Activated naive CD4-positive, alpha-beta T cell treated with anti-CD3 and anti-CD28 coated beads, Interleukin-2, amount 10 ng/mL, durations not matched to agents 7 days and 5 days (primary cell): ENCODE measurements at regions of chr2 and their contacts with region 1.

Region 1: DNA sequence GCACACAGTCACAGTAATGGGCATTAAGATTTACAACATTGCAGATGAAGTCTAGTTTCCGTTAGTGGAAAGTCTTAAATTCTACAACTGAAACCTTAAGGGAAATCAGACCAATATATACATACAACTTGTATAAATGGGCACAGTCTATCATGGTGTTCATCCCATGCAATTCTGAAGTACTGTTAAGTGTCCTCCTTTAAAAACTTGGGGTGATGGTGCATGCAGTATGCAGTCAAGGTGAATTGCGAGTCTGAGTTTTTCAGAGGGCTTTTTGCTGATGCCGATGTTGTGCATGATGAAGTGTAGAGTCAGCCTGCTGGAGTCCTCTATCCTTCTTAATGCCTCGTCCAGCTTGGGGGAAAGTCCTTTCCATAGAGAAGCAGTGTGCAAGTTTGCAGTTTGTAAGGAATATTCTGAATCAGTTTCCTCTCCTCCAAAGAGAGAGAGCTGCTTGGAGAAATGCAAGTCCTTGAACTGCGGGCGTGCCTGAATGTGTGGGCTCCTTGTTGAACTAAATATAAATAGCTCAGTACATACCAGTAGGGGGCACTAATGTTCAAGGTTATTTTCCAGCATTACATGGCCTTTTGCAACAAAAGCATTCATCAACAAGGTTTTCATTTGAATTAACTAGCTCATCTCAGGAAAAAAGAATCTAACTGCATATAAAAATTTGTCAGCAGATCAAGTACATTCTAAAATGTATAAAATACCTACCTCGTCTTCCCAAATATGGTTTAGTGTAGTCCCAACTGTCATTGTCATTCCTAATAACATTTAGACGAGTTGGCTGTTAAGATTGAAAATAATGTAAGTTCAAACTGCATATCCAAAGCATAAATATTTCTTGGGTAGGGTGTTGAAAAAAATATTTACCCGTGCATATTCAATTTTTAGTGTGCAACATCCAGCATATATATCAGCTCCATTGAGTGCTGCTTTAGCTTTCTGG is 21.3 kb downstream of the HNRNPLL start:
- DNase-seq: peak; percentile 52
- H3K4me3 Mint-ChIP-seq: no peak overlapping the region
- H3K27ac Mint-ChIP-seq: peak overlapping the region; percentile 13
- H3K4me1 Mint-ChIP-seq: peaks cover 9% of the 10 kb centered on the region
- H3K27me3 Mint-ChIP-seq: no peaks in the 10 kb centered on the region

Region 2: DNA sequence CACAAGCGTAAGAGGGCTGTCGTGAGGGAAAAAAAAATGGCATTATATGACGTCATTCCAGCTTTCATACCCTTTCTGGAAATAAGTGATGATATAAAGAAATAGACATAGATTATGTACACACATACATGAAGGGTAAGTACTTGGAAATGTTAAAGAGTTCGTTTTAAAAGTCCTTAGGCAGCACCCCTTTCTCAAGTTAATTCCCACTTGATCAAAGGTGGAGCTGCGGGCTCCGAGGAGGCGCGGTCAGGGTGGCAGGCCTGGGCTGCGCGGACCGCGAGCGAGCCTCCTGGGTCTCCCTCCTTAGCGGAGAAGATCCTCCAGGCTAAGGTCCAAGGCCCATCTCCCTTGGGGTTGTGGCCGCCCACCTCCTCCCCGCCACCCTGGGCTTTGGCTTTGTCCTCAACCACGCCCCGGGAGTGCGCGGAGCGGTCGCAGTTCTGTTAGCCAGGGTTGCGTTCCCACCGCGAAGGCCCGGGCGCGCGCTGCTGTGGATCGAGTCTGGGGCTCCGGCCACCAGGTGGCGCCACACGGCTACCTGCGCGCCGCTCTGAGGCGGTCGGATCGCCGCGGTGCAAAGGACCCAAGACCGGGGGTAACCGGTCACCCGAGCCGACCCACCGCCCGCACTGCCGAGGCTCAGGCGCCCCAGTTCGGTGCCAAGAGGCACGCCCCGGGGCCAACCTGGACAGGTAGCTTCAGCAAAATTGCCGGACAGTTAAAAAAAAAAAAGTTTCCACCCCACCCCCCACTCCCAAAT is 45.5 kb before region 1 on chr2:
- CTCF ChIA-PET with region 1: interaction called, 13 read pairs
- DNase-seq: peak; percentile 83
- H3K4me3 Mint-ChIP-seq: peak overlapping the region; percentile 37
- H3K27ac Mint-ChIP-seq: no peak overlapping the region
- H3K4me1 Mint-ChIP-seq: peaks cover 6% of the 10 kb centered on the region
- H3K27me3 Mint-ChIP-seq: peaks cover 53% of the 10 kb centered on the region

Region 3: GRCh38 chr2:38602732-38603401 is 21.4 kb after region 1 on chr2 and contains the start of gene HNRNPLL:
- CTCF ChIA-PET with region 1: interaction called, 59 read pairs
- DNase-seq: peak; percentile 98
- H3K4me3 Mint-ChIP-seq: peak within 1 kb of the TSS; percentile 94
- H3K27ac Mint-ChIP-seq: peak within 1 kb of the TSS; percentile 96
- H3K4me1 Mint-ChIP-seq: peaks cover 49% of the 10 kb centered on the region
- H3K27me3 Mint-ChIP-seq: no peaks in the 10 kb centered on the region

Region 4: DNA sequence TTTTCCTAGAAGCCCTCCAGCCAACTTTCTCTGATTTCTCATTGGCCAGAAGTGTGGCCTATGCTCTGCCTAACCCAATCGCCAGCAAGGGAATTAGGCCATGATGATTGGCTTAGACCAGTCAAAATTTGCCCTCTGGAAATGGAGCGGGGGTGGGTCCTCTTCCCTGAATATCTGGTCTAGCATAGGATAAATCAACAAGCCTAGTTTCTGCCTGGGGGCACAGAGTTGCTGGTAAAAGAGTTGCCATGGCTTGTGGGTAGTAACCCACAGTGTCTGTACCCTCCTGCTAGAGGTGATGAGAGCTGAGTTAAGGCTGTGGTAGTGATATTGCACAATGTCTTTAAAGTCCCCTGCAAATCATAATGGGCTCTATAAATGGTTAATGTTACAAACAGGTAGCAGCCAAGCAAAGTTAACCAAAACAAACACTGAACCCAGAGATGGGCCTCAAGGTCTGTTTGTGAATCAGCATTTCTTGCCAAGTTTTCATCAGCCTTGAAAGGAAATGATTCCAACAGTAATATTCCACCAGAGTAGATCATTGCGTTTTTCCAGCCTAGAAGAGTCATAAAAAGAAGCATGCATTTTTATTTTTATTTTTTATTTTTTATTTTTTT is 103.8 kb after region 1 on chr2:
- CTCF ChIA-PET with region 1: interaction called, 15 read pairs
- DNase-seq: no peak
- H3K4me3 Mint-ChIP-seq: no peak overlapping the region
- H3K27ac Mint-ChIP-seq: no peak overlapping the region
- H3K4me1 Mint-ChIP-seq: peaks cover 44% of the 10 kb centered on the region
- H3K27me3 Mint-ChIP-seq: no peaks in the 10 kb centered on the region

Region 5: GRCh38 chr2:38728694-38729093 is 147.2 kb after region 1 on chr2:
- CTCF ChIA-PET with region 1: interaction called, 130 read pairs
- DNase-seq: peak; percentile 3
- H3K4me3 Mint-ChIP-seq: no peak overlapping the region
- H3K27ac Mint-ChIP-seq: peak overlapping the region; percentile 19
- H3K4me1 Mint-ChIP-seq: peaks cover 11% of the 10 kb centered on the region
- H3K27me3 Mint-ChIP-seq: no peaks in the 10 kb centered on the region

Region 6: DNA sequence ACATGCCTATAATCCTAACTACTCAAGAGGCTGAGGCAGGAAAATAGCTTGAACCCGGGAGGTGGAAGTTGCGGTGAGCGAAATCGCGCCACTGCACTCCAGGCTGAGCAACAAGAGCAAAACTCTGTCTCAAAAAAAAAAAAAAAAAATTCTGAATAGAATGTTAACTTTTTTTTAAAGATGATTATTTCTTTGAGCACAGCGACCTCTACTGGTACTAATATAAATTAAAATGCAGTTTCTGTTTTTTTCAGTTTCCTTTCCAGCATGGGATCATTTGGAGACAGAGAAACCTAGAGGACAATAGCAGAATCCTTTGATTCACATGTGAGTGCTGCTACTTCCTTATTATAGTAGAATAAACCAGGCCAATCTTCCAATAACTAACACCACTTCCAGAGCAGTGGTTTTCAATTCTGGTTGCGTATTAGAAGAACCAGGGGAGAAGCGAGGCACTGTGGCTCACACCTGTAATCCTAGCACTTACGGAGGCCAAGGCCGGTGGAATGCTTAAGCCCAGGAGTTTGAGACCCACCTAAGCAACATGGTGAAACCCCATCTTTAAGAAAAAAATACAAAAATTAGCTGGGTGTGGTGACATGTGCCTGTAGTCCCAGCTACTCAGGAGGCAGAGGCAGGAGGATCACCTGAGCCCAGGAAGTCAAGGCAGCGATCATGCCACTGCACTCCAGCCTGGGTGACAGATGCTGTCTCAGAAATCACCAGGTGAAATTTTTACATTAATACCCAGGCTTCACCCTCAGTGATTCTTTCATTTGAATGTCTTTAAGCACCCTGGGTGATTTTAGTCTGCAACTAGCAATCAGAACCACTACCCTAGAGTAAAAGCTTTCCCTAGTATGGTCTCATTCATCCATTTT is 159.6 kb after region 1 on chr2:
- CTCF ChIA-PET with region 1: interaction called, 118 read pairs
- DNase-seq: peak; percentile 54
- H3K4me3 Mint-ChIP-seq: no peak overlapping the region
- H3K27ac Mint-ChIP-seq: peak overlapping the region; percentile 54
- H3K4me1 Mint-ChIP-seq: peaks cover 28% of the 10 kb centered on the region
- H3K27me3 Mint-ChIP-seq: no peaks in the 10 kb centered on the region

Region 7: GRCh38 chr2:38886063-38886462 is 304.6 kb after region 1 on chr2:
- CTCF ChIA-PET with region 1: no interaction called
- DNase-seq: no peak
- H3K4me3 Mint-ChIP-seq: no peak overlapping the region
- H3K27ac Mint-ChIP-seq: no peak overlapping the region
- H3K4me1 Mint-ChIP-seq: no peaks in the 10 kb centered on the region
- H3K27me3 Mint-ChIP-seq: peaks cover 4% of the 10 kb centered on the region

Region 8: DNA sequence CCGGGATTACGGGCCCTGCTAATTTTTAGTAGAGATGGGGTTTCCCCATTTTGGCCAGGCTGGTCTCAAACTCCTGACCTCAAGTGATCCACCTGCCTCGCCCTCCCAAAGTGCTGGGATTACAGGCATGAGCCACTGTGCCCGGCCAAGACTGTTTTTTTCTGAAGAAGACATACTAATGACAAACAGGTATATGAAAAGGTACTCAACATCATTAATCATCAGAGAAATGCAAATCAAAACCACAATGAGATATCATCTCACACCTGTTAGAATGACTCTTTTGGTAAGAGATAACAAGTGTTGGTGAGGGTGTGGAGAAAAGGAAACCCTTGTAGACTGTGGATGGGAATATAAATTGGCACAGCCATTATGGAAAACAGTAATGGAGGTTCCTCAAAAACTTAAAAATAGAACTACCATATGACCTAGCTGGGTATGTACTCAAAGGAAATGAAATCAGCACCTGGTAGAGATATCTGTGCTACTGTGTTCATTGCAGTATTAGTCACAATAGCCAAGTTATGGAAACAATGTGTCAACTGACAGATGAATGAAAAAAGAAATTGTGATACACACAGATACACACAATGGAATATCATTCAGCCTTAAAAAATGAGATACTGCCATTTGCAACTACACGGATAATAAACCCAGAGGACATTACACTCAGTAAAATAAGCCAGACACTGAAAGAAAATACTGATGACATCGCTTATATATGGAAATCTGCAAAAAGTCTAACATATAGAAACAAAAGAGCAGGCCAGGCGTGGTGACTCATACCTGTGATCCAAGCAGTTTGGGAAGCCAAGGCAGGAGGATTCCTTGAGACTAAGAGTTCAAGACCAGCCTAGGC is 518.6 kb after region 1 on chr2:
- CTCF ChIA-PET with region 1: no interaction called
- DNase-seq: no peak
- H3K4me3 Mint-ChIP-seq: no peak overlapping the region
- H3K27ac Mint-ChIP-seq: peak overlapping the region; percentile 79
- H3K4me1 Mint-ChIP-seq: peaks cover 65% of the 10 kb centered on the region
- H3K27me3 Mint-ChIP-seq: no peaks in the 10 kb centered on the region